Ascending aorta (tissue), 2 donors: ENCODE measurements at regions of chr6 and their contacts with region 1.

Region 1: GRCh38 chr6:31403283-31403989 is at the start of gene MICA:
- DNase-seq: peak; percentile 74 to 96
- H3K4me3 ChIP-seq: peak within 1 kb of the TSS; percentile 68 to 76
- H3K27ac ChIP-seq: peak within 1 kb of the TSS; percentile 92 to 95
- H3K4me1 ChIP-seq: peaks cover 12 to 26% of the 10 kb centered on the region in 2 donors
- H3K27me3 ChIP-seq: no peaks in the 10 kb centered on the region
- CTCF ChIP-seq: peak in 2 of 3 experiments; percentile 24 to 39
- total RNA-seq, gene MICA: 19.2 TPM

Region 2: DNA sequence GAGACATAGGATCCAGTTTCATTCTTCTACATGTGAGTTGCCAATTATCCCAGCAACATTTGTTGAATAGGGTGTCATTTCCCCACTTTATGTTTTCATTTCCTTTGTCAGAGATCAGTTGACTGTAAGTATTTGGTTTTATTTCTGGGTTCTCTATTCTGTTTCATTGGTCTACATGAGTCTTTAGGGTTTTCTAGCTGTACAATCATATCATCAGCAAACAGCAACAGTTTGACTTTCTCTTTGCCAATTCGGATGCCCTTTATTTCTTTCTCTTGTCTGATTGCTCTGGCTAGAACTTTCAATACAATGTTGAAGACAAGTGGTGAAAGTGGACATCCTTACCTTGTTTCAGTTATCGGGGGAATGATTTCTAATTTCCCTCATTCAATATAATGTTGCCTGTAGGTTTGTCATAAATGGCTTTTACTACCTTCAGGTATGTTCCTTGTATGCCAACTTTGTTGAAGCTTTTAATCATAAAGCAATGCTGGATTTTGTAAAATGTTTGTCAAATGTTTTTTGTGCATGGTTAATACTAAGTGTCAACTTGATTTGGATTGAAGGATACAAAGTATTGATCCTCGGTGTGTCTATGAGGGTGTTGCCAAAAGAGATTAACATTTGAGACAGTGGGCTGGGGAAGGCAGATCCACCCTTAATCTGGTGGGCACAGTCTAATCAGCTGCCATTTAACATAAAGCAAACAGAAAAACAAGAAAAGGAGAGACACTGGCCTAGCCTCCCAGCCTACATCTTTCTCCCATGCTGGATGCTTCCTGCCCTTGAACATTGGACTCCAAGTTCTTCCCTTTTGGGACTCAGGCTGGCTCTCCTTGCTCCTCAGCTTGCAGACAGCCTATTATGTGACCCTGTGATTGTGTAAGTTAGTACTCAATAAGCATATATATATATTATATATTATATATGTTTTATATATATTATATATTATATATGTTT is 23.2 kb after region 1 on chr6:
- intact Hi-C with region 1: loop called (anchors 2 kb)
- DNase-seq: peak in 1 of 2 donors; percentile 72
- H3K4me3 ChIP-seq: no peak overlapping the region
- H3K27ac ChIP-seq: peak overlapping the region in 1 of 2 donors; percentile 27
- H3K4me1 ChIP-seq: no peaks in the 10 kb centered on the region
- H3K27me3 ChIP-seq: no peaks in the 10 kb centered on the region
- CTCF ChIP-seq: no peak